Astrocyte of the spinal cord (primary cell): ENCODE measurements at regions of chr15 and their contacts with region 1.

Region 1: GRCh38 chr15:101193120-101193644 is 58.7 kb downstream of the CHSY1 start:
- DNase-seq: no peak
- H3K4me3 ChIP-seq: no peak overlapping the region
- CTCF ChIP-seq: no peak

Region 2: GRCh38 chr15:101242160-101242998 is 49.2 kb after region 1 on chr15:
- in situ Hi-C with region 1: loop called (anchors 5 kb)
- DNase-seq: peak; percentile 69
- H3K4me3 ChIP-seq: no peak overlapping the region
- CTCF ChIP-seq: no peak